Activated CD4-positive, alpha-beta T cell treated with anti-CD3 and anti-CD28 coated beads, Interleukin-2, amount 10 ng/mL, durations not matched to agents 24 days and 14 days (primary cell): ENCODE measurements at regions of chr3 and their contacts with region 1.

Region 1: GRCh38 chr3:171829841-171830517 is 13.2 kb upstream of the TMEM212 start:
- DNase-seq: peak; percentile 61
- H3K4me3 Mint-ChIP-seq: no peak overlapping the region
- H3K27ac Mint-ChIP-seq: no peak overlapping the region
- H3K4me1 Mint-ChIP-seq: peaks cover 7% of the 10 kb centered on the region
- H3K27me3 Mint-ChIP-seq: peaks cover 44% of the 10 kb centered on the region

Region 2: DNA sequence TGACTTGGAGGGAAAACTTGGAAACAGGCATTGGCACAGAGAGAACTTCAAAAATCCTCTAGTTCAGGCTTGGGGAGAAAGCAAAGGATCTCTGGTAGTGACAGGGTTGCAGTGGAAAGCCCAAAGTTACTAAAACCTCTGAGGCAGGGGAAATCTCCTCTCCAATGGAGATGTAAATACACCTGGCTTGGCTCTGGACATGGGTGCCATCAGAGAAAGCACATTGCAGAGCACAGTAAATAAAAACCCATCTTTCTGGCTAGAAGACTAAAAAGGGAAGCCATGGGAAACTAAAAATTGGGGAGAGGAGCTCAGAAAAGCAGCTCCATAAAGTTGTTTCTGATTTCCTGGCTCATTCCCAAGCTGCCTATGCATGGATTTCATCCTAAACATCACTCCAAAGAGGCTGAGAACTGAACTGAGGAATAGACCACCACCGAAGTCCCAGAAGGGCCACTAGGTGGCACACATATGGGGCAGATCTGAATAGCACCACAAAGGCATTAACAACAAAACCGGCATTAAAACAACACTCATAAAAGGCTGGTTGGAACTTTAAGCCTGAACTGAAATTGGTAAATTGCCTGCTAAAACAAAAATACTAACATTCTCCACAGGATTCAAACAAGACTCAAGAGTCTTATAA is 126.1 kb before region 1 on chr3:
- intact Hi-C with region 1: loop called (anchors 5 kb)
- DNase-seq: peak; percentile 61
- H3K4me3 Mint-ChIP-seq: no peak overlapping the region
- H3K27ac Mint-ChIP-seq: no peak overlapping the region
- H3K4me1 Mint-ChIP-seq: no peaks in the 10 kb centered on the region
- H3K27me3 Mint-ChIP-seq: peaks cover 22% of the 10 kb centered on the region

Region 3: GRCh38 chr3:171846597-171846996 is 16.6 kb after region 1 on chr3:
- intact Hi-C with region 1: no loop called
- DNase-seq: peak; percentile 76
- H3K4me3 Mint-ChIP-seq: no peak overlapping the region
- H3K27ac Mint-ChIP-seq: peak overlapping the region; percentile 17
- H3K4me1 Mint-ChIP-seq: peaks cover 17% of the 10 kb centered on the region
- H3K27me3 Mint-ChIP-seq: peaks cover 15% of the 10 kb centered on the region

Region 4: GRCh38 chr3:171994646-171995428 is 164.9 kb after region 1 on chr3:
- intact Hi-C with region 1: no loop called
- DNase-seq: no peak
- H3K4me3 Mint-ChIP-seq: no peak overlapping the region
- H3K27ac Mint-ChIP-seq: no peak overlapping the region
- H3K4me1 Mint-ChIP-seq: peaks cover 4% of the 10 kb centered on the region
- H3K27me3 Mint-ChIP-seq: peaks cover 2% of the 10 kb centered on the region